Left cardiac atrium (tissue), 4 donors: ENCODE measurements at regions of chr7 and their contacts with region 1.

Region 1: DNA sequence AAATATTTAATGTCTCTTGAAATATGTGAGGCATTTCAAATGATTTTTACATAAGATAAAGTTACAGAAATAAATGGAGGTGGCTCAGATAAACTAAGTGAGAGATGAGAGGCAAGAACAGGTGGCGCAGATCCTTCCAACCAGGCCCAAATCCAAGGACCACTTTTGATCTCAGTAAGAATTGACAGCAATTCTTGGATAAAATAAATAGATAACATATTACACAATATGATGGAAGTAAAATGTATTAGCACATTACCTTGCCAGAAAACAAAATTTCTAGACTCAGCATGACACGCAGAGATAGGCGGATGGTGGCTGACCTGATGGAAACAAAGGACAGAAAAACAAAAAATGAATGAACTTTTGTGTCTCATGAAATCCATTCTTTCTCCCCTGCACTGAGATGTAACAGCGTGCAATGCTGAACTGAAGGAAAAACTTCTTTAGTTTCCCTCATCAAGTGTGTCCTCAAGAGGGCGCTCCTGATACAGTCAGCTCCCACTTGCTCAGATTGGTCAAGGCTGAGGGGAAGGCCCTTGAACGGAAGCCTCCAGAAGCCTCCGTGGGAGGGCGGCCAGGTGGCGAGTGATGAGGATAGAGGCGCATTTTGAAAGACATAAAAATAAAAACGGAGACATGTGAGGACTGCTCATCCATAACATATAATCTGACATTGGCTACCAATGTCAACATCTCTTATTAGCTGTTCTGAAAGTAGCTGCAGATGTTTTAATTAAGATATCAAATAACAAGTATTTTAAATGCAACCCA is 62.8 kb upstream of the GSDME start:
- DNase-seq: peak; percentile 87
- ATAC-seq: peak; percentile 89 to 90

Region 2: GRCh38 chr7:24494832-24495231 is 325.3 kb before region 1 on chr7:
- intact Hi-C with region 1: no loop called
- DNase-seq: no peak
- ATAC-seq: no peak

Region 3: GRCh38 chr7:24778543-24779282 is 41.4 kb before region 1 on chr7:
- intact Hi-C with region 1: no loop called
- DNase-seq: peak; percentile 65
- ATAC-seq: peak; percentile 82 to 96

Region 4: GRCh38 chr7:24979863-24980533 is 159.9 kb after region 1 on chr7 and contains the start of gene OSBPL3:
- intact Hi-C with region 1: loop called (anchors 5 kb)
- DNase-seq: peak; percentile 96
- ATAC-seq: peak; percentile 96 to 97
- total RNA-seq, gene OSBPL3: 8.8 to 10.0 TPM

Region 5: DNA sequence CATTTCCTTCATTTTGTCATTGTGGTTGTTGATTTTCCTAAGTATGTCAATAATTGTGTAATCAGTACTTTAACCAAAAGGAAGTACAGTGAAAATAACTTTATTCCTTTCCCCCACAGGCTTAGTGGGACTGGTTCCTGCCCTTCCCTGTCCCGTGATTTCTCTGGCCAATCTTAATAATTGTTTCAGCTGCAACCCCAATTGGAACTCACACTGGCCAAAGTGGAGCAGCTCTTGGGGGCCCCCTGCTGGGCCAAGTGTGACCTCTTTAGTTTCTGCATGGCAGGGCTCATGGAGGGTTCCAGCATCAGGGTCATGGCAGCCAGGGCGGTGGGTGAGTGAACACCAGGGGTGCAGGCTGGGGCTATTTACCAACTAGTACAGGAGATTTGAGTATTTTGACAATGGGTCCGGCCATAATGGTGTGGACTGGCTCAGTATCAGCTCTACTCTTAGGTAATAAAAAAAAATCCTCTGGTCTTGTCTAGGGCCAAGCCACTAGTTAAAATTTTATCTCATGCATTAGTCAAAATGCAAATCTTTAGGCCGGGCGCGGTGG is 273.2 kb after region 1 on chr7:
- intact Hi-C with region 1: loop called in 1 of 2 experiments (anchors 5 kb)
- DNase-seq: peak; percentile 67
- ATAC-seq: peak; percentile 88 to 90